HCT116 (cell line): ENCODE measurements at regions of chr6 and their contacts with region 1.

Region 1: DNA sequence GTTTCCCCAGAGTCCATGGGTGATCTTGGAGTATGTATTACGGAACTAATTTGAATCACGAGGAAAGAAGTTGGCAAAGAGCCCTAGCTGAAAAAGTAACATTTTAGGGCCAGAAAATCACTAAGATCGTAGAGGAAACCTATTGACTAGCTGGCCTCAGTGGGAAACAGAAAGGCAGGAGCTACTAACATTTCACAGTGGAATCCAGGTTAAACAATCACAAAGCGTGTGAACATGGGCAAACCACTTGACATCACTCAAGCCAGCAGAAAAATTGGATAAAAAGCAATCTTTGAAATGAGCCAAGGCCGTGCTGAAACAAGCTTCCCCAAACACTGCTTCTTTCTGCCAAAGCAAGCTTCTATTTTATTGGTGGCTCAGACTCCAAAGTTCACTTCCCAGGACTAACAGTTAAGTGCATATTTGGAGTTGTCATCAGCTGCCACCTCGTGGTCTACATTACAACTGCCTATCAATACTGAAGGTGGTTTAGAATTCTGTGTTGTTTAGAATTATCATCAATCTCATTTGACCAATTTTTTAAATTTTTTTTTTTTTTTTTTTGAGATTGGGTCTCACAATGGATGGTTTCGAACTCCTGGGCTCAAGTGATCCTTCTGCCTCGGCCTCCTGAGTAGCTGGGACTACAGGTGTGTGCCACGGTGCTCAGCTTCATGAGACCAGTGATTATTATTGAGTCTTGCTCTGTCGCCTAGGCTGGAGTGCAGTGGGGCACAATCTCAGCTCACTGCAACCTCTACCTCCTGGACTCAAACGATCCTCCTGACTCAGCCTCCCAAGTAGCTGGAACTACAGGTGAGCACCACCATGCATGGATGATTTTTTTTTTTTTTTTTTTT is 10.6 kb downstream of the RPS10 start:
- DNase-seq: peak; percentile 38
- ATAC-seq: peak; percentile 65
- H3K4me3 ChIP-seq: no peak overlapping the region
- H3K27ac ChIP-seq: no peak overlapping the region
- H3K4me1 ChIP-seq: peaks cover 9 to 34% of the 10 kb centered on the region in 2 experiments
- H3K27me3 ChIP-seq: no peaks in the 10 kb centered on the region
- CTCF ChIP-seq: peak; percentile 48 to 70 (median 49)
- POLR2A ChIP-seq: no peak
- RAD21 ChIP-seq: peak; percentile 82

Region 2: GRCh38 chr6:34161857-34162515 is 253.2 kb before region 1 on chr6:
- CTCF ChIA-PET with region 1: interaction called, 28 read pairs
- POLR2A ChIA-PET with region 1: interaction called, 3 read pairs
- RAD21 ChIA-PET with region 1: interaction called in 1 of 2 experiments, 6 read pairs
- intact Hi-C with region 1: loop called (anchors 1 kb)
- DNase-seq: no peak
- ATAC-seq: no peak
- H3K4me3 ChIP-seq: no peak overlapping the region
- H3K27ac ChIP-seq: no peak overlapping the region
- H3K4me1 ChIP-seq: peaks cover 0 to 4% of the 10 kb centered on the region in 2 experiments; a peak in 2 of 4 replicates
- H3K27me3 ChIP-seq: no peaks in the 10 kb centered on the region
- CTCF ChIP-seq: no peak
- POLR2A ChIP-seq: no peak
- RAD21 ChIP-seq: no peak

Region 3: DNA sequence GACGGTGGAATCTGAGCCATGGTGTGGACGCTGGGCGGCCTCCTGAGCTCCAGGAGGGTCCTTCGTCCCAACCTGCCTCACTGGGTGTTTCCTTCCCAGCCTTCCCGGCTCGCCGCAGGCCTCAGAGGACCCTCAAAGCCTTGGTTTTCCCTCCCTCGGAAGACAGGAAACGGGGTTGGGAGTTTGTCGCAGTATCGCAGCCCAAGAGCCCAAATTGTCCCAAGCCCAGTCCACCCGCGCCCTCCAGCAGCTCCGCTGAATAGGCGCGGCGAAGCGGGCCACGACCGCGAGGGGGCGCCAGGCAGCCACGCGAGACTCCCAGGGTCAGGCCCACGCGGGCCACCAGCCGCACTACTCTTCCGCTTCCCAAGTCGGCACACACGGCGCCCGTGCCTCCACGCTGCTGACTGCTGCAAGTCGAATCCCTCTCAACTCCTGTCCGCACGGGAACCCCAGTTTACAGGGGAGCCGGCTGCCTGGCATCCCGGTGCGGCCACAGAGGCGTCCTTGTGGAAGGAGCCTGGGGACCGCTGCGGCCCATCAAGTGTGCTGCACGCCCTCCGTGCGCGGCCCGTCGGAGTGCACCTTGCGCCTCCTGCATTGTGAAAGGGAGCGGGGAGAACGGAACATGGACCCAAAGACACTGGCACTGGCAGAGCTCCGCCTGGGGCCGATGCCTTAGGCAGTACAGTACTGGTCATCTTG is 219.0 kb before region 1 on chr6:
- CTCF ChIA-PET with region 1: interaction called, 17 read pairs
- POLR2A ChIA-PET with region 1: interaction called, 8 read pairs
- RAD21 ChIA-PET with region 1: interaction called in 1 of 2 experiments, 3 read pairs
- intact Hi-C with region 1: loop called (anchors 1 kb)
- DNase-seq: peak; percentile 26
- ATAC-seq: peak; percentile 91
- H3K4me3 ChIP-seq: peak overlapping the region in 1 of 2 experiments; percentile 28; a peak in 2 of 4 replicates
- H3K27ac ChIP-seq: no peak overlapping the region; the same call in 1 of the 2 replicates
- H3K4me1 ChIP-seq: peaks cover 4 to 31% of the 10 kb centered on the region in 2 experiments
- H3K27me3 ChIP-seq: no peaks in the 10 kb centered on the region
- CTCF ChIP-seq: peak; percentile 71 to 90 (median 79)
- POLR2A ChIP-seq: peak; percentile 32
- RAD21 ChIP-seq: peak; percentile 96

Region 4: GRCh38 chr6:34425498-34426410 is 10.5 kb after region 1 on chr6 and contains the start of gene RPS10:
- CTCF ChIA-PET with region 1: interaction called, 5 read pairs
- POLR2A ChIA-PET with region 1: interaction called, 20 read pairs
- RAD21 ChIA-PET with region 1: no interaction called
- intact Hi-C with region 1: no loop called
- DNase-seq: peak; percentile 88
- ATAC-seq: peak; percentile 90
- H3K4me3 ChIP-seq: peak within 1 kb of the TSS; percentile 75 to 98
- H3K27ac ChIP-seq: peak within 1 kb of the TSS; percentile 85
- H3K4me1 ChIP-seq: peaks cover 0 to 21% of the 10 kb centered on the region in 2 experiments; a peak in 3 of 4 replicates
- H3K27me3 ChIP-seq: no peaks in the 10 kb centered on the region
- CTCF ChIP-seq: no peak
- POLR2A ChIP-seq: peak; percentile 79
- RAD21 ChIP-seq: 0 out of 2 replicates have a peak, but pooled peaks have one; percentile 5
- total RNA-seq, gene RPS10: 1,863 TPM

Region 5: DNA sequence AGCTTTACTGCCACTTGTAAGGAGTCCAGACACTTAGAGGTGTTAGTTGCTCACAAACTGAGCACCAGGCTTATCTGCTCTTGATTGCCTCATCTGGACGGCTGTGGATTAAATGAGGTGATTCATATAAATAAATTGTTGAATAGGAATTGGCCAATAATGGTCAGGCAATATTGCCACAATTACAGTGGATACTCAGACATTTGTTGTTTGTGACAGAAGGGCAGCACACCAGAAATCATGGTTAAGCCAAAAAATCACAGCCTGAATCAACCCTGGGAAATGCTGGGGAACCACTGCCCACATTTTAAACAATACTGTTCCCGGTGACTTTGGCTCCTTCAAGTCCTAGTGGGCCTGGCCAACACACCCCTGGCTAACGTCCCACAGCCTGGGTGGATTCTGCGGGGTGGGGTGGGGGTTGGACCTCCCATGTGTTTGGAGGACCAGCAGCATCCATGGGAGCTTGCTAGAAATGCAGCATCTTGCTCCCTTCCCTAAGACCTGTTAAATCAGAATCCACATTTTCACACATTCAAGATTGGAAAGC is 170.4 kb after region 1 on chr6:
- CTCF ChIA-PET with region 1: no interaction called
- POLR2A ChIA-PET with region 1: no interaction called
- RAD21 ChIA-PET with region 1: no interaction called
- intact Hi-C with region 1: no loop called
- DNase-seq: no peak
- ATAC-seq: no peak
- H3K4me3 ChIP-seq: no peak overlapping the region
- H3K27ac ChIP-seq: no peak overlapping the region
- H3K4me1 ChIP-seq: no peaks in the 10 kb centered on the region
- H3K27me3 ChIP-seq: no peaks in the 10 kb centered on the region
- CTCF ChIP-seq: no peak
- POLR2A ChIP-seq: no peak
- RAD21 ChIP-seq: no peak